Sciatic nerve (tissue), 2 donors: ENCODE measurements at regions of chr1 and their contacts with region 1.

Region 1: DNA sequence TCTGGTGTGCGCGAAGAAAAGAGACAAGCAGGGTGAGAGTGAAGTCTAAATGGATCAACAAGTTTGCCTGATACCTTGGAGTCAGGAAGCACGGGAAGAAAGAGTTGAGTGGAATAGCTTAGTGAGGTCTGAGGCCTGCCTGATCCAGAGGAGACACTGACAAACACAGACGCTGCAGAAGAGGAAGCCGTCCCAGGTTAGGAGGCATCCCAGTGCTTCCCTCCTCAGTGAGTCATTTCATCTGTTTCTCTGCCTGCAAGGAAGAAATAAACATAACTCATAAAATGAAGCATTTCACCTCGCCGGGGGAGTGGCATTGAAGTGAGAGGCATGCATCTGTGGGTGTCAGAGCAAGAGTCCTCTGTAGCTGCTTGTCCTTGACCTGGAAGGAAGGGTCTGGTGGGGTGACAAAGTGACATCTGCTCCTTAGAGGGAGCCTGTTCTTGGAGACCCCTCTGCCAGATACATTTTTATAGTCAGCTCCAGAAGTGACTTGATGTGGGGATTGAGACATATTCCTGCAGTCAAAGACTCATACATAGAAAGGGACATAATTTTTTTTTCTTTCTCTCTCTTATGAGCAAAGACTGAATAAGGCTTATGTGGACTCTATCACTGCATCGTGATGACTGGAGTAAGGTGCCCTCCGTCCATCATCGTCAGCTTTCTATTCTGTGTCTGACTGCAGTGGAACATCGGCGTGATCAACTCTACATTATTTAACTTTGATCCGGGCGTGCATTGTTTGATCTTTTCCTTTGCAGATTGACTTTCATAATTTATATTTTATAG is 256.7 kb downstream of the KIF26B start:
- DNase-seq: no peak
- ATAC-seq: no peak

Region 2: DNA sequence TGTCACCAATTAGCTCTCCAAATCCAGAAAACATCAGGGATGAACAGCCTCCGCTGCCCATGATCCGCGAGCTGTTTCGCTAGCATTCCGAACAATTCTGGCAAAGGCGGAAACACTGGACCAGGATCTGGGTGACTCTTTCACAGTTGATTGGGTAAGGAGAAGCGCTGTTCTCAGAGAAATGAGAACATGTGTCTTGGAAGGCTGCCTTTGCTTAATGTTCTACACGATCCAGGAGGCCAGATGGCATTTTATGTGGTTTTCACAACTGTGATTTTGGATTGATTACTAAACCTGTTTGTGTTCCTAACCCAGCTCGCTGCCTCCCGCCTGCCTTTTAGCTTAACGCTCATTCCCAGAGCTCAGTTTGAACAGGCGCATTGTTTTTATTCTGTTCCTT is 112.7 kb before region 1 on chr1:
- intact Hi-C with region 1: no loop called
- DNase-seq: no peak
- ATAC-seq: peak; percentile 73

Region 3: GRCh38 chr1:245730801-245731200 is 319.4 kb after region 1 on chr1:
- intact Hi-C with region 1: no loop called
- DNase-seq: no peak
- ATAC-seq: no peak

Region 4: GRCh38 chr1:245788269-245788668 is 376.8 kb after region 1 on chr1:
- intact Hi-C with region 1: loop called (anchors 5 kb)
- DNase-seq: no peak
- ATAC-seq: no peak

Region 5: DNA sequence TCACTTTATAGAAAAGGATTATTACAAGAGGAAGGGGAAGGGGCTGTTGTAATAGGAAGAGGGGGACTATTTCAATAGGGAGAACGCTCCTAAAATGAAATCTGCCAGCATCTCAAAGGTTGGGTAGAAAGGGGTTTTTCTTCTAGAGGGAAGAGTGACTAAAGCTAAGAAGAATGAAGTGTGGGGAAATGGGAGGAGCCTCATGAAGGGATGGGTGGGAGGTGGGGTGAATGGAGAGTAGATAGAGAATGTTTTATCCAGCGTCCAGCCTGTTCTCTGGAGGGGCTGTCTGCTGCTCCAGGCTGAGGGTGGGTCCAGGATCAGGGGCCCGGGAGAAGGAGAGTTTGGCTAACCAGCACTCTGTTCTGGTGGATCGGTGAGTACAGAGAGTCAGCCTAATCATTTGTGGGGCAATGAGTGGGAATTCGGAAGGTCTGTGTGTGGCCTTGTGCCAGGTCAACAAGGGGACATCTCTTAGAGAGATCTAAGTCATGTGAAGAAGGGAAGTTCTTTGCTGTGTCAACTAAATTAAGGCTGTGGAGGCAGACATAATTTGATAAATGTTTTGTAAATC is 1869.6 kb after region 1 on chr1:
- intact Hi-C with region 1: no loop called
- DNase-seq: no peak
- ATAC-seq: no peak